Panc1 (cell line): ENCODE measurements at regions of chr9 and their contacts with region 1.

Region 1: DNA sequence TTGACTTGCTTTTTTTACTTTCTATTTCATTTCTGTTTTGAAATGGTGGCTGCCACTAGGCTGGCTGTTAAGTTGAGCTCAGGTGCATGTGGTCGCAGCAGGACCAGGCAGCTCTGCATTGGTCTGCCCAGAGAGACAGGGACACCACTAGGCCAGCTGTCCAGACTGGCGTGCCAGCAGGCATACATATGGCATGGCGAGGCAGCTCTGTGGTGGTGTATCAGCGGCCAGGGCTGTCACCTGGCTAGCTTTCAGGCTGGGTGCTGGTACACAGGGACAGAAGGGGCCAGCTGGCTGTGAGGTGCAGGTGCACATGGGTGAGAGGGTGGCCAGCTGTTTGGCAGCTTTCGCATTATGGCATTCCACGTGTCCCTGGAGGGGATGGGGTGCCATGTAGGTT is 654.0 kb upstream of the ACO1 start:
- DNase-seq: no peak
- ATAC-seq: no peak
- H3K4me3 ChIP-seq: no peak overlapping the region
- H3K27ac ChIP-seq: no peak overlapping the region
- H3K4me1 ChIP-seq: no peaks in the 10 kb centered on the region
- H3K27me3 ChIP-seq: no peaks in the 10 kb centered on the region
- CTCF ChIP-seq: no peak

Region 2: DNA sequence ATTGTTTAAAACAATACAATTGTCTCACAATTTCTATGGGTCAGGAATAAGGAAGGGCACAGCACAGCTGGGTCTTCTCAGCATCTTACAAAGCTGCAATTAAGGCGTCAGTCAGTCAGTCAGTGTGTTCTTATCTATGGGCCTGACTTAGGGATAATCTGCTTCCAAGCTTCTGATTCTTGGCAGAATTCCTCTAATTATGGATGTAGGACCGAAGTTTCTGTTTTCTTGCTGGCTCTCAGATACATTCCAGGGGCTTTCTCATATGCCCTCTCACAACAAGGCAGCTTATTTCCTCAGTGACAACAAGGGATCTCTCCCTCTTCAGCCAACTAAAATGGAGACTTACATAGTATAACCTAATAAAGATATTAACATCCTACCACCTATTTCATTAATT is 1271.2 kb before region 1 on chr9:
- CTCF ChIA-PET with region 1: no interaction called
- POLR2A ChIA-PET with region 1: no interaction called
- in situ Hi-C with region 1: no loop called
- intact Hi-C with region 1: loop called (anchors 10 kb)
- DNase-seq: no peak
- ATAC-seq: no peak
- H3K4me3 ChIP-seq: no peak overlapping the region
- H3K27ac ChIP-seq: no peak overlapping the region
- H3K4me1 ChIP-seq: no peaks in the 10 kb centered on the region
- H3K27me3 ChIP-seq: no peaks in the 10 kb centered on the region
- CTCF ChIP-seq: no peak